ENCODE measurements at regions of chr19 and their contacts with region 1.

Region 1: DNA sequence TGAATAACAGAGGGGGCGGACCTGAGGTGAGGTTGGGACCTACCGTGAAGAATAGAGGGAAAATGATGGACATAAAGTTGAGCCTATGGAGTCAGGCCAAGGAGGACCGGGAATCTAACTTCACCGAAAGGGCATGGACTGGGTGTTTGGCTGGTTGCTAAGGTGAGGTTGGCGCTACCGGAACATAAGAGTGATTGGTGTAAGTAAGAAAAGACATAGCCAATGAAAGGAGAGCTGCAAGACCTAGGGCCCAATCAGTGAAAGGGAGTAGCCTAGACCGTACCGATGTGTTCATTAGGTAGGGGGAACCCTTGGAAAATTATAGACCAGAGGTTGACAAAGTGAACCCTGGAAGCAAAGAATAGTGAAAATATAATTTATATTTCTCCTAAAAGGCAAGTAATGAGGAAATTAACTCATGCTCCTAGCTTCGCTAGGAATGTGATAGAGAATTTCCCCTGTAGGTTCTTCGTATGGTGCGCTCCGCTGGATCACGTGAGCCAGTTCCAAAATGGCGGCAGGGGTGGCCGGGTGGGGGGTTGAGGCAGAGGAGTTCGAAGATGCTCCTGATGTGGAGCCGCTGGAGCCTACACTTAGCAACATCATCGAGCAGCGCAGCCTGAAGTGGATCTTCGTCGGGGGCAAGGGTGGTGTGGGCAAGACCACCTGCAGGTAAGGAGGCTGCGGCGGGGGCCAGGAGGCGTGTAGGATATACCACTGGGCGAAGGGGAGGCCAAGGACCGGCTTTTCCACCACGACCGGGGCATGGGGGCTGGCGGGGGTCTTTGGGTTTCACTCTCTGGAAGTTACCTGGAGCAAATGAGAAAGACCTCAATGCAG is at the start of gene GET3:
- DNase-seq: peak; percentile 85 to 97 (median 94)
- ATAC-seq: peak; percentile 87 to 94 (median 92)
- H3K4me3 ChIP-seq: peak within 1 kb of the TSS; percentile 64 to 96 (median 81)
- H3K27ac ChIP-seq: peak within 1 kb of the TSS; percentile 64 to 99 (median 94)
- H3K4me1 ChIP-seq: peaks cover 6 to 44% (median 34%) of the 10 kb centered on the region in 12 donors
- H3K27me3 ChIP-seq: no peaks in the 10 kb centered on the region
- CTCF ChIP-seq: no peak
- POLR2A ChIP-seq: peak in 1 of 2 donors; percentile 38
- total RNA-seq, gene GET3: 54.3 to 81.5 (median 61.8) TPM

Region 2: GRCh38 chr19:12722566-12723380 is 14.4 kb before region 1 on chr19:
- intact Hi-C with region 1: loop called in 1 of 10 experiments (anchors 2 kb)
- DNase-seq: peak; percentile 96 to 99 (median 98)
- ATAC-seq: peak; percentile 92 to 96 (median 94)
- H3K4me3 ChIP-seq: peak overlapping the region; percentile 65 to 98 (median 79)
- H3K27ac ChIP-seq: peak overlapping the region; percentile 88 to 98 (median 96)
- H3K4me1 ChIP-seq: peaks cover 4 to 44% (median 33%) of the 10 kb centered on the region in 12 donors
- H3K27me3 ChIP-seq: no peaks in the 10 kb centered on the region
- CTCF ChIP-seq: no peak
- POLR2A ChIP-seq: no peak

Region 3: GRCh38 chr19:12777217-12778016 is 40.2 kb after region 1 on chr19:
- intact Hi-C with region 1: loop called in 2 of 10 experiments (anchors 1 to 2 kb)
- DNase-seq: peak; percentile 83 to 91 (median 87)
- ATAC-seq: peak; percentile 27 to 52 (median 40)
- H3K4me3 ChIP-seq: peak overlapping the region; percentile 41 to 83 (median 68)
- H3K27ac ChIP-seq: peak overlapping the region; percentile 78 to 99 (median 94)
- H3K4me1 ChIP-seq: peaks cover 0 to 64% (median 49%) of the 10 kb centered on the region in 12 donors
- H3K27me3 ChIP-seq: no peaks in the 10 kb centered on the region
- CTCF ChIP-seq: peak; percentile 93 to 98 (median 97)
- POLR2A ChIP-seq: peak in 1 of 2 donors; percentile 15